Panc1 (cell line): ENCODE measurements at regions of chr9 and their contacts with region 1.

Region 1: DNA sequence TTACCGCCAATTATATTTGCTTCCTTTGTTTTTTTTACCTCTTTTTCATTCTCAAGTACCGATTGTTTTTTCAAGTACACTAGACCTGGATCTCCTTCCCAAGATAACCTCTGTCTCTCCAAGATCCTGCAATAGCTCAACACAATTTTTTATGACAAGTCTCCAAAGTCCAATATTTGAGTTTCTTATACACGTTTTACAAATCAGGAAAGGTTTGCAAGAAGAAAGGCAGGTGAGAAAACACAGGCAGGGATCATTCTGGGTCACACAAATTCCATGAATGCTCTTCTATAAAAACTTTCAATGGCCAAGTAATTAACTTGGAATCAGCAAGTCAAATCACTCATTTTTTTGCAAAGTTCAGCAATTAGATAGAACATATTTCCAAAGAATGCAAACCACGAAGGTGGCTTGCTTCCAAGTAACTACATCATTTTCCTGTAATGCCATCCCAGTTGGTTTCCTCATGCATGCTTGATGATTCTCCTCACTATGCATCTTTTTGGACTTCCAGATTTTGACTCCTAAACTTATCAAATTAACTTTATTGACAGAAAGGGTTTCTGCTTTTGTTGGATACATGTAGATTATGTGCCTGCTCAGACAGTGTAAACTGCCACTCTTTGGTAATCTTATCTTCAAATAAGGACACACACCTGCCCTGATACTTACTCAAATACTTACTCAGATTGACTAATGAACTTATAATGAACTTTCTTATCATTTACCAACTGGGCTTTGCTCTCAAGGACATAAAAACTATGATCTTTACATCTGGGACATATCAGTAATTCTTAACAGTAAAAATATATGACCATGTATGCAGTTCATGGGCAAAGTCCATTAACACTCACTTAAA is 24.7 kb upstream of the IFNE start:
- DNase-seq: no peak
- ATAC-seq: no peak; the same call in 1 of the 2 replicates
- H3K4me3 ChIP-seq: no peak overlapping the region
- H3K27ac ChIP-seq: peak overlapping the region; percentile 86
- H3K4me1 ChIP-seq: peaks cover 69% of the 10 kb centered on the region
- H3K27me3 ChIP-seq: no peaks in the 10 kb centered on the region
- CTCF ChIP-seq: no peak

Region 2: DNA sequence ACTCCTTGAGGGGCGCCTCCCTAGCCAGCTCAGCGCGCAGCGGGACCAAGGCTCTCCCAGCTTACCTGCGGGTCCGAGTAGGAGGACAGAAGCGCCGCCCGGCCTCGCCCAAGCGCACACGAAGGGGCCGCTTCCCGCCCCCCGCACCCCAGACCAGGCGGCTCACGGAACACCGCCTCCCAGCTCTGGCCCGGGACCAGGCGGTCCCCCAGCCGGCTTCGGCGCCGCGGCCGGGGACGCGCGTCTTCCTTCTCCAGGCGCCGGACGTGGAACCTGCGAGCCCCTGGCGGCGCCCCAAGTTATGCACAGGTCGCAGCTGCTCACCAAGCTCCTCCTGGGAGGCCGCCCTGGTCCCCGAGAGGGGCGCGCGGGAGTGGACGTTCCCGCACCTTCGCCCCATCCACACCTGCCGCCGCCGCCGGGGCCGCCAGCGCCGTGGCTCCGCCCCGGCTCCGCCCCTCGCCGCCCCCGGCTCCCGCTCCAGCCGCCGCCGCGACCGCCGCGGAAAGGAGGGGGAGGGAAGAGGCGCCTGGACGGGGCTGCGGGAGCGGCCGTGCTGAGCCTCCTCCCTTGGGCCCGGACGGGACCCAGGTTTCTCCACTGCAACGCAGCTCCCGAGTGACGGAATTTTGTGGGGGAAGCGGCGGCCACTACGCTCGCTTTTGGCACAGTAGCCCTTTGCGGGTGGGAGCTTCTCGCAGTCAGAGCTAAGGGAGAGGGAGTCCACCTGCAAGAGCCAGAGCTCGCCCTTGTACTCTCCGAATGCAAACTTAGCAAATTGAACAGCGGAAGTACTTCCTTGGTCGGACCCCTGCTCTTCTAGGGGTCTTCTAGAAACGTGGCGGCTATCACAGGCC is 52.8 kb after region 1 on chr9:
- CTCF ChIA-PET with region 1: no interaction called
- POLR2A ChIA-PET with region 1: no interaction called
- in situ Hi-C with region 1: no loop called
- intact Hi-C with region 1: loop called (anchors 10 kb)
- DNase-seq: no peak
- ATAC-seq: peak; percentile 91
- H3K4me3 ChIP-seq: peak overlapping the region; percentile 74 to 76
- H3K27ac ChIP-seq: peak overlapping the region; percentile 99
- H3K4me1 ChIP-seq: peaks cover 43% of the 10 kb centered on the region
- H3K27me3 ChIP-seq: no peaks in the 10 kb centered on the region
- CTCF ChIP-seq: peak; percentile 23; the same call in 1 of the 2 replicates

Region 3: GRCh38 chr9:21656776-21657674 is 150.2 kb after region 1 on chr9:
- CTCF ChIA-PET with region 1: no interaction called
- POLR2A ChIA-PET with region 1: no interaction called
- in situ Hi-C with region 1: no loop called
- intact Hi-C with region 1: no loop called
- DNase-seq: no peak
- ATAC-seq: peak; percentile 51
- H3K4me3 ChIP-seq: no peak overlapping the region
- H3K27ac ChIP-seq: peak overlapping the region; percentile 86
- H3K4me1 ChIP-seq: peaks cover 34% of the 10 kb centered on the region
- H3K27me3 ChIP-seq: no peaks in the 10 kb centered on the region
- CTCF ChIP-seq: no peak

Region 4: DNA sequence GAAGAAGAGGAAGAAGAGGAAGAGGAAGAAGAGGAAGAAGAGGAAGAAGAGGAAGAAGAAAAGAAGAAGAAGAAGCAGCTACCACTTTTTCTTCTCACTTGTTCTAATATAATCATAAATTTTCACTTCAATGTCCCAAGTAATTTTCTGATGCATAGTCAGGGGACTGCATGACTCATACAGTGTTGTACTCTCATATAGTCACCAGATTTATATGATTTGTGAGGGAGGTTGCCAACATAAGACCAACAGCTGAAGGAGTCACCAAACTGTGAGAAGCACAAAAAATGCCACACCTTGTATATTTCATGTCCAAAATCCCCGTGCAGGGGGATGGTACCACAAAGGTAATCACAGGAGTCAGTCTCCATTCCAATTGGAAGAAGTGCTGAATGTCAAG is 907.0 kb after region 1 on chr9:
- CTCF ChIA-PET with region 1: no interaction called
- POLR2A ChIA-PET with region 1: no interaction called
- in situ Hi-C with region 1: no loop called
- intact Hi-C with region 1: loop called (anchors 1 kb)
- DNase-seq: peak; percentile 28
- ATAC-seq: no peak
- H3K4me3 ChIP-seq: no peak overlapping the region
- H3K27ac ChIP-seq: no peak overlapping the region
- H3K4me1 ChIP-seq: peaks cover 3% of the 10 kb centered on the region; the same call in 1 of the 2 replicates
- H3K27me3 ChIP-seq: no peaks in the 10 kb centered on the region
- CTCF ChIP-seq: no peak